Dorsolateral prefrontal cortex (tissue), 120 donors: ENCODE measurements at regions of chr12 and their contacts with region 1.

Region 1: GRCh38 chr12:96516472-96517430 is 27.4 kb downstream of the CFAP54 start:
- DNase-seq: peak; percentile 58 to 91 (median 68)
- H3K4me3 ChIP-seq: no peak overlapping the region
- H3K27ac ChIP-seq: no peak overlapping the region
- H3K27me3 ChIP-seq: no peaks in the 10 kb centered on the region
- CTCF ChIP-seq: peak; percentile 63 to 92 (median 78)

Region 2: GRCh38 chr12:96061864-96062453 is 454.8 kb before region 1 on chr12:
- intact Hi-C with region 1: loop called (anchors 2 kb)
- DNase-seq: peak in 9 of 10 donors; percentile 31 to 80 (median 61)
- H3K4me3 ChIP-seq: no peak overlapping the region
- H3K27ac ChIP-seq: no peak overlapping the region
- H3K27me3 ChIP-seq: no peaks in the 10 kb centered on the region
- CTCF ChIP-seq: peak; percentile 59 to 93 (median 84)